Tibial artery (tissue), 4 donors: ENCODE measurements at regions of chr10 and their contacts with region 1.

Region 1: DNA sequence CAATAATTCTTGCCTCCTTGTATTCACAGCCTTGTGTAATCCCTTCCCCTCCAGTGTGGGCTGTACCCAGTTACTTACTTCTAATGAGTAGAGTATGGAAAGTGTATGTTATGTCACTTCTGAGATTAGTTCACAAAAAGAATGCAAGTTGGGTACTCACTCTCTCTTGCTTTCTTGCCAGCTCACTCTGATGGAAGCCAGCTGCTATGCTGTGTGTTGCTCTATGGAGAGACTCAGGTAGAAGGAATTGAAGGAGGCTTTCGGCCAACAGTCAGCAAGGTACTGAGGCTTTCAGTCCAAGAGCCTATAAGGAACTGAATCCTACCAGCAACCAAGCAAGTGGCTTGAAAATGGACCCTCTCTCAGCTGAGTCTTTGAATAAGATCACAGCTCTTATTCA is 9.7 kb upstream of the BICC1 start:
- DNase-seq: no peak
- H3K4me3 ChIP-seq: no peak overlapping the region
- H3K27ac ChIP-seq: no peak overlapping the region
- H3K4me1 ChIP-seq: no peaks in the 10 kb centered on the region
- H3K27me3 ChIP-seq: no peaks in the 10 kb centered on the region
- CTCF ChIP-seq: no peak

Region 2: GRCh38 chr10:58565271-58565670 is 62.3 kb after region 1 on chr10:
- intact Hi-C with region 1: loop called (anchors 2 kb)
- DNase-seq: no peak
- H3K4me3 ChIP-seq: no peak overlapping the region
- H3K27ac ChIP-seq: no peak overlapping the region
- H3K4me1 ChIP-seq: peaks cover 0 to 21% (median 4%) of the 10 kb centered on the region in 4 donors
- H3K27me3 ChIP-seq: no peaks in the 10 kb centered on the region
- CTCF ChIP-seq: no peak